ENCODE measurements at regions of chr12 and their contacts with region 1.

Region 1: GRCh38 chr12:4215229-4216186 is 58.1 kb upstream of the CCND2 start:
- DNase-seq: peak; percentile 89
- ATAC-seq: peak; percentile 91
- H3K4me3 ChIP-seq: peak overlapping the region; percentile 50; the same call in 1 of the 2 replicates
- H3K27ac ChIP-seq: peak overlapping the region; percentile 93
- H3K4me1 ChIP-seq: peaks cover 27% of the 10 kb centered on the region
- H3K27me3 ChIP-seq: no peaks in the 10 kb centered on the region
- CTCF ChIP-seq: no peak
- EP300 ChIP-seq: peak; percentile 41 to 71; a peak in 3 of 4 replicates
- POLR2A ChIP-seq: peak; percentile 42; the same call in 1 of the 2 replicates
- RAD21 ChIP-seq: no peak; the same call in 1 of the 2 replicates

Region 2: DNA sequence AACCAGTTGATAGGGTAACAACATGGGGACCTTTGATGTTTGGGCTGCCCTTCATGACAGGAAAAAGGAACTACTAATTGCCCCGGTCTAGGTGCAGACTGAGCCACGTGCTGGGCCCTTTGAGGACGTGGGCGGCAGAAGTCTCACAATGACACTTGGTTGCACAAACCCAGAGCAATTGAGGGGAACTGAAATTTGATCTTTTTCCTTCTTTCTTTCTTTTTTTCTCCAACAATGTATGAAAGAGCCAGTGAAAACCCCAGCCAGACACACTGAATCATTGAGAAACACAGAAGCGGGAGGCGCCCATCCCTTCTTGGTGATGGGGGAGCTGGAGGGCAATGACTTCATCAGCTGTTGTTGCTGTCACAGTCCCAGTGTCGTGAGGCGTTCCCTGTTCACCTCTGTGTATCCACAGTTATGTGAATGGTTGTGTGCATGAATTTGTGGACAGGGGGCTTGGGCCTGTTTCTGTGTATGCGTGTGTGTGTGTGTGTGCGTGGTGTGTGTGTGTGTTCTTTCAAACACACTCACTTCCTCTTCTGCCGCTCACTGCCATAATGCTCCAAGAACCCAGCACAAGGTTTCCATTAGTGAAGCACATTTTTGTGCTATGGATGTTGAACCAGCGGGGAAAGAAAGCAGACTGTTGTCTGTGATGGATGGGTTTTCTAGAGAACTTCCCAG is 79.4 kb before region 1 on chr12:
- CTCF ChIA-PET with region 1: interaction called, 5 read pairs
- POLR2A ChIA-PET with region 1: interaction called, 11 read pairs
- RAD21 ChIA-PET with region 1: interaction called, 97 read pairs
- SMC1A ChIA-PET with region 1: interaction called, 17 read pairs
- in situ Hi-C with region 1: no loop called
- intact Hi-C with region 1: no loop called
- DNase-seq: peak; percentile 94
- ATAC-seq: peak; percentile 88
- H3K4me3 ChIP-seq: peak overlapping the region; percentile 55; the same call in 1 of the 2 replicates
- H3K27ac ChIP-seq: peak overlapping the region; percentile 64
- H3K4me1 ChIP-seq: peaks cover 65% of the 10 kb centered on the region
- H3K27me3 ChIP-seq: no peaks in the 10 kb centered on the region
- CTCF ChIP-seq: no peak
- EP300 ChIP-seq: peak; percentile 85 to 87; a peak in 3 of 4 replicates
- POLR2A ChIP-seq: no peak
- RAD21 ChIP-seq: no peak

Region 3: GRCh38 chr12:4164559-4165558 is 50.6 kb before region 1 on chr12:
- CTCF ChIA-PET with region 1: interaction called, 5 read pairs
- POLR2A ChIA-PET with region 1: interaction called, 4 read pairs
- RAD21 ChIA-PET with region 1: interaction called, 13 read pairs
- SMC1A ChIA-PET with region 1: interaction called, 54 read pairs
- in situ Hi-C with region 1: no loop called
- intact Hi-C with region 1: no loop called
- DNase-seq: no peak
- ATAC-seq: peak; percentile 92
- H3K4me3 ChIP-seq: peak overlapping the region; percentile 55; the same call in 1 of the 2 replicates
- H3K27ac ChIP-seq: peak overlapping the region; percentile 59
- H3K4me1 ChIP-seq: peaks cover 21% of the 10 kb centered on the region
- H3K27me3 ChIP-seq: no peaks in the 10 kb centered on the region
- CTCF ChIP-seq: no peak
- EP300 ChIP-seq: no peak
- POLR2A ChIP-seq: peak; percentile 82
- RAD21 ChIP-seq: no peak

Region 4: DNA sequence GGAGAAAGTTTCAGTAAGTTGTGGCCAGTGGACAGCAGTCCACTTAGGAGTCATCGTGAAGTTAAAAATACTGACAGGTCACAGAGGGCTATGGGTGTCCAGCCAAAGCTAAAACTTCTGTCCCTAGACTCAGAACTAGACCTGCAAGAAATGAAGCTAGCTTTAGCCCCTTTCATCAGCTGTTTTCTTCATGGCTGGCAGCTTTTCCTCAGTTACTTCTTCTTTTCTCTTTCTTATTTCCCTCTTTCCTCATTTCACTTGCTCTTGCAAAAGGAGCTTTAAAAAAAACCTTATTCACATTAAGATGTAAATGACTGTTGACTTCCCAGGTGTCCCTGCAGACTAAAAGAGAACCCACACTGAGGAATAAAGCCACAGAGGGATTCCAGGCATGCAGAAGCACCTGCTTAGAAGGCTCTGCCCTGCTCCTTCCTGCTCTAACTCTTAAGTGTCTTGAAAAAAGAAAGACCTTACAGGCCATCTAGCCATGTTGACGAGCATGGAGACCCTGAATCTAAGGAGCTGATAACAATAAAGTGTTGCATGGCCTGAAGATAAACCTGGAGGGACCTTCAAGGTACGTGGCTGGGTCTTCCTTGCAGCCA is 11.6 kb before region 1 on chr12:
- CTCF ChIA-PET with region 1: interaction called, 10 read pairs
- POLR2A ChIA-PET with region 1: interaction called, 18 read pairs
- RAD21 ChIA-PET with region 1: interaction called, 12 read pairs
- SMC1A ChIA-PET with region 1: interaction called, 46 read pairs
- in situ Hi-C with region 1: no loop called
- intact Hi-C with region 1: no loop called
- DNase-seq: no peak
- ATAC-seq: no peak
- H3K4me3 ChIP-seq: no peak overlapping the region
- H3K27ac ChIP-seq: no peak overlapping the region
- H3K4me1 ChIP-seq: peaks cover 6% of the 10 kb centered on the region
- H3K27me3 ChIP-seq: no peaks in the 10 kb centered on the region
- CTCF ChIP-seq: no peak
- EP300 ChIP-seq: no peak
- POLR2A ChIP-seq: no peak
- RAD21 ChIP-seq: no peak

Region 5: GRCh38 chr12:4251216-4251891 is 35.8 kb after region 1 on chr12:
- CTCF ChIA-PET with region 1: interaction called, 6 read pairs
- POLR2A ChIA-PET with region 1: interaction called, 14 read pairs
- RAD21 ChIA-PET with region 1: interaction called, 22 read pairs
- SMC1A ChIA-PET with region 1: interaction called, 53 read pairs
- in situ Hi-C with region 1: no loop called
- intact Hi-C with region 1: no loop called
- DNase-seq: no peak
- ATAC-seq: peak; percentile 70
- H3K4me3 ChIP-seq: no peak overlapping the region
- H3K27ac ChIP-seq: no peak overlapping the region
- H3K4me1 ChIP-seq: peaks cover 4% of the 10 kb centered on the region
- H3K27me3 ChIP-seq: no peaks in the 10 kb centered on the region; a peak in 1 of 4 replicates
- CTCF ChIP-seq: peak in 1 of 3 experiments; percentile 19; a peak in 1 of 6 replicates
- EP300 ChIP-seq: no peak
- POLR2A ChIP-seq: no peak
- RAD21 ChIP-seq: peak; percentile 23; the same call in 1 of the 2 replicates

Region 6: DNA sequence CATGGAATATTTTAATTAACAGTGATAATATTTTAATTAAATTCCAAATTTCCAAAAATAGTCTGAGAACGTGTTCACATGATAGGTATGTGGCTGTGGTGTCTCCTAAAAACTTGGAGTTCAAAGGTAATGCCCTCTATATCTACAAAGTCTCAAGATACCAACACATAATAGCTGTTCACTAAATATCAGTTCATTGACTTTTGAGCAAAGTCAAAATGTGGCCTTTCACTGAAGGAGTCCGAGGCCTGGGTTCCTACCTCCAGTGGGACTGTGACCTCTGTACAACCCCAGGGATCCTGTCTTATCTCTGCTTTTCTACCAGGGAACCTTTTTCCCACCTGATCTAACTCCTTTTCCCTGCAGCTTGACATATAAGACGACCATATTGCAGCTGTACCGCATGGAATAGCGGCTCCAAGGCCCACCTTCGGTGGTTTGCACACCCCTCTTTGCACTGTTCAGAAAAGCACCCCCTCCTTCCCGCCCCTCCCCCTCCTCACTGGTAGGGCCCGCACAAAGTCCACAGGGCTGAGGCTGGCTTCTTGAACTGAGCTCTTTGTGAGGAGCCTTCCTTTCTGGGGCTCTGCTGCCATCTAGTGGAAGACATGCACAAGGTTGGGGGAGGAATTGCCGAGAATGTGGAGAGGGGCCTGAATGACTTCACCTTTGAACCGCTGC is 61.2 kb after region 1 on chr12:
- CTCF ChIA-PET with region 1: interaction called, 21 read pairs
- POLR2A ChIA-PET with region 1: interaction called, 84 read pairs
- RAD21 ChIA-PET with region 1: interaction called, 109 read pairs
- SMC1A ChIA-PET with region 1: interaction called, 40 read pairs
- in situ Hi-C with region 1: no loop called
- intact Hi-C with region 1: loop called (anchors 1 kb)
- DNase-seq: peak; percentile 78
- ATAC-seq: peak; percentile 48
- H3K4me3 ChIP-seq: peak overlapping the region; percentile 99
- H3K27ac ChIP-seq: peak overlapping the region; percentile 2; the same call in 1 of the 2 replicates
- H3K4me1 ChIP-seq: peaks cover 26% of the 10 kb centered on the region
- H3K27me3 ChIP-seq: no peaks in the 10 kb centered on the region
- CTCF ChIP-seq: peak; percentile 84 to 93 (median 85)
- EP300 ChIP-seq: no peak
- POLR2A ChIP-seq: 0 out of 2 replicates have a peak, but pooled peaks have one; percentile 42
- RAD21 ChIP-seq: peak; percentile 100

Region 7: DNA sequence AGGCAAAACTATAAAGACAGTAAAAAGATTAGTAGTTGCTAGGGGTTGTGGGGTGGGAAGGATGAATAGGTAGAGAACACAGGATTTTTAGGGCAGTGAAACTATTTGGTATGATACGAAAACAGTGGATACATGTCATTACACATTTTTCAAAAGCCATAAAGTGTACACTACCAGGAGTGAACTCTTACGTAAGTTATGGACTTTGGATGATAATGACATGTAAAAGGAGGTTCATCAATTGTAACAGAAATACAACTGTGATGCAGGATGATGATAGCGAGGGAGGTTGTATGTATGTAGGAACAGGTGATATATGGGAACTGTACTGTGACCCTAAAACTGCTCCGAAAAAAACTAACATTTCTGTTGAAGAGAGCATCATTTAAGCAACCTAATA is 245.3 kb after region 1 on chr12:
- CTCF ChIA-PET with region 1: no interaction called
- POLR2A ChIA-PET with region 1: no interaction called
- RAD21 ChIA-PET with region 1: no interaction called
- SMC1A ChIA-PET with region 1: no interaction called
- in situ Hi-C with region 1: no loop called
- intact Hi-C with region 1: no loop called
- DNase-seq: no peak
- ATAC-seq: no peak
- H3K4me3 ChIP-seq: no peak overlapping the region
- H3K27ac ChIP-seq: no peak overlapping the region
- H3K4me1 ChIP-seq: no peaks in the 10 kb centered on the region
- H3K27me3 ChIP-seq: no peaks in the 10 kb centered on the region
- CTCF ChIP-seq: no peak
- EP300 ChIP-seq: no peak
- POLR2A ChIP-seq: no peak
- RAD21 ChIP-seq: no peak

Measured in GM12878 (cell line).